Body of pancreas (tissue), 4 donors: ENCODE measurements at regions of chr7 and their contacts with region 1.

Region 1: GRCh38 chr7:93055543-93056107 is 62.2 kb downstream of the SAMD9 start:
- DNase-seq: no peak
- ATAC-seq: peak; percentile 53
- H3K4me3 ChIP-seq: no peak overlapping the region
- H3K27ac ChIP-seq: no peak overlapping the region
- H3K4me1 ChIP-seq: no peaks in the 10 kb centered on the region
- H3K27me3 ChIP-seq: no peaks in the 10 kb centered on the region
- CTCF ChIP-seq: peak; percentile 36 to 97 (median 83)
- POLR2A ChIP-seq: no peak

Region 2: GRCh38 chr7:92609921-92610518 is 445.6 kb before region 1 on chr7:
- intact Hi-C with region 1: loop called (anchors 10 kb)
- DNase-seq: no peak
- ATAC-seq: peak; percentile 41
- H3K4me3 ChIP-seq: no peak overlapping the region
- H3K27ac ChIP-seq: no peak overlapping the region
- H3K4me1 ChIP-seq: peaks cover 9% of the 10 kb centered on the region
- H3K27me3 ChIP-seq: no peaks in the 10 kb centered on the region
- CTCF ChIP-seq: peak in 6 of 7 experiments; percentile 6 to 42 (median 37)
- POLR2A ChIP-seq: no peak